ENCODE measurements at regions of chr6 and their contacts with region 1.

Region 1: GRCh38 chr6:144104898-144105487 is 9.6 kb upstream of the SF3B5 start:
- DNase-seq: peak in 2 of 5 donors; percentile 81 to 90
- H3K4me3 ChIP-seq: no peak overlapping the region
- H3K27ac ChIP-seq: no peak overlapping the region
- H3K4me1 ChIP-seq: no peaks in the 10 kb centered on the region
- H3K27me3 ChIP-seq: no peaks in the 10 kb centered on the region
- CTCF ChIP-seq: peak; percentile 77

Region 2: GRCh38 chr6:143912671-143913070 is 192.3 kb before region 1 on chr6:
- intact Hi-C with region 1: no loop called
- DNase-seq: no peak
- H3K4me3 ChIP-seq: no peak overlapping the region
- H3K27ac ChIP-seq: no peak overlapping the region
- H3K4me1 ChIP-seq: no peaks in the 10 kb centered on the region
- H3K27me3 ChIP-seq: no peaks in the 10 kb centered on the region
- CTCF ChIP-seq: no peak

Region 3: GRCh38 chr6:144215932-144216667 is 111.1 kb after region 1 on chr6:
- intact Hi-C with region 1: loop called (anchors 10 kb)
- DNase-seq: peak; percentile 97 to 99 (median 99)
- H3K4me3 ChIP-seq: peak overlapping the region; percentile 67 to 85 (median 83)
- H3K27ac ChIP-seq: peak overlapping the region; percentile 91 to 94
- H3K4me1 ChIP-seq: peaks cover 0 to 11% (median 9%) of the 10 kb centered on the region in 3 donors
- H3K27me3 ChIP-seq: no peaks in the 10 kb centered on the region
- CTCF ChIP-seq: peak; percentile 39

Measured in kidney (tissue), 22 donors.